ENCODE measurements at regions of chr14 and their contacts with region 1.

Region 1: GRCh38 chr14:35416108-35416750 is 11.7 kb upstream of the NFKBIA start:
- DNase-seq: no peak
- H3K4me3 ChIP-seq: no peak overlapping the region
- H3K27ac ChIP-seq: no peak overlapping the region
- H3K4me1 ChIP-seq: peaks cover 55% of the 10 kb centered on the region
- H3K27me3 ChIP-seq: no peaks in the 10 kb centered on the region

Region 2: GRCh38 chr14:35146711-35147149 is 269.5 kb before region 1 on chr14:
- in situ Hi-C with region 1: loop called (anchors 5 kb)
- DNase-seq: no peak
- H3K4me3 ChIP-seq: no peak overlapping the region
- H3K27ac ChIP-seq: no peak overlapping the region
- H3K4me1 ChIP-seq: no peaks in the 10 kb centered on the region
- H3K27me3 ChIP-seq: no peaks in the 10 kb centered on the region

Region 3: GRCh38 chr14:35215110-35215876 is 200.9 kb before region 1 on chr14:
- in situ Hi-C with region 1: loop called (anchors 10 kb)
- DNase-seq: peak; percentile 67
- H3K4me3 ChIP-seq: no peak overlapping the region
- H3K27ac ChIP-seq: no peak overlapping the region
- H3K4me1 ChIP-seq: peaks cover 16% of the 10 kb centered on the region
- H3K27me3 ChIP-seq: no peaks in the 10 kb centered on the region

Region 4: DNA sequence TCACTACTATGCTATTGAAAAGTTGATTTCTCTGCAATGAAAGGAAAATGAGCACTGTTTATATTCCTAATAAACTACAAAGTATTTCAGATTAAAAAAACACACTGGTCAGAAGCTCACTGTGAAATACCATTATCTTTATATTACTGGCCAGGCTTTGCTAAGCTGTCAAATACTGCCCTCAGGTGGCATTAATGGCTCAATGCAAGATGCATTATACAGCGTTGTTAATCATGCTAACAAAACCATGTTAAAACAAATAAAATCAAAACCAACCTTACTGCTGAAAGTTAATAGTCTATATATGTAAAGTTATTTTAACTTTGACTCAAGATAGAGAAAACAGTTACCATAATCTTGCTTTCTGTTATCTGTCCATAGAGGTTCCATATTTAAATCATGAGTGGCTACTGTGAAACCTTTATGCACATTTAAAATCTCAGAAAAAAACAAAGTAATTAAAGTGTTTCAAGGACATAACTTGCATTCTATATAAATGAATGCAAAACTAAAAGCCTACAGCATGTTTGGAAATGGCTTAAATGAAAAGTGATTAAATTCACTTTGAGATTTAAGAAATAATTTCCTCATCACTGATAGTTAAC is 271.2 kb after region 1 on chr14:
- in situ Hi-C with region 1: no loop called
- DNase-seq: peak; percentile 76
- H3K4me3 ChIP-seq: no peak overlapping the region
- H3K27ac ChIP-seq: no peak overlapping the region
- H3K4me1 ChIP-seq: no peaks in the 10 kb centered on the region
- H3K27me3 ChIP-seq: no peaks in the 10 kb centered on the region

Region 5: DNA sequence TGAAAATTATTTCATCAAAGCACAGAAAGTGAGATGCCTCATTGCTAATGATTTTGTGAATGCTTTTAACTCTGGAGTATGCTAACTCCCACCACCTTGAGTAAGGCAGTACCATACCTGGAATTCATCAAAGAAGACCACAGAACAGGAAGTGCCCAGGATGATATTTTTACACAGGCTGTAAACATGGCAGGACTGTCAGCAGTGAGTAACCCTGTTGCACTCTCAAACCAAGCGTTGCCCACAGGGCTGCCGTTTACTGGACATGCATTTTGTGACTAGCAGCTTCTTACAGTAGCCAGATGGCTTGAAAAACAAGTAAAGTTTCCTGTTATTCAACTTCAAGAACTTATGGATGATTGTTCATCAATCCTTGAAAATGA is 350.5 kb after region 1 on chr14:
- in situ Hi-C with region 1: no loop called
- DNase-seq: no peak
- H3K4me3 ChIP-seq: no peak overlapping the region
- H3K27ac ChIP-seq: no peak overlapping the region
- H3K4me1 ChIP-seq: no peaks in the 10 kb centered on the region
- H3K27me3 ChIP-seq: no peaks in the 10 kb centered on the region

Measured in GM23248 (cell line).